AG04449 (cell line): ENCODE measurements at regions of chr4 and their contacts with region 1.

Region 1: GRCh38 chr4:88021824-88022223 is 14.4 kb downstream of the PKD2 start:
- DNase-seq: no peak
- H3K4me3 ChIP-seq: no peak overlapping the region
- CTCF ChIP-seq: no peak

Region 2: DNA sequence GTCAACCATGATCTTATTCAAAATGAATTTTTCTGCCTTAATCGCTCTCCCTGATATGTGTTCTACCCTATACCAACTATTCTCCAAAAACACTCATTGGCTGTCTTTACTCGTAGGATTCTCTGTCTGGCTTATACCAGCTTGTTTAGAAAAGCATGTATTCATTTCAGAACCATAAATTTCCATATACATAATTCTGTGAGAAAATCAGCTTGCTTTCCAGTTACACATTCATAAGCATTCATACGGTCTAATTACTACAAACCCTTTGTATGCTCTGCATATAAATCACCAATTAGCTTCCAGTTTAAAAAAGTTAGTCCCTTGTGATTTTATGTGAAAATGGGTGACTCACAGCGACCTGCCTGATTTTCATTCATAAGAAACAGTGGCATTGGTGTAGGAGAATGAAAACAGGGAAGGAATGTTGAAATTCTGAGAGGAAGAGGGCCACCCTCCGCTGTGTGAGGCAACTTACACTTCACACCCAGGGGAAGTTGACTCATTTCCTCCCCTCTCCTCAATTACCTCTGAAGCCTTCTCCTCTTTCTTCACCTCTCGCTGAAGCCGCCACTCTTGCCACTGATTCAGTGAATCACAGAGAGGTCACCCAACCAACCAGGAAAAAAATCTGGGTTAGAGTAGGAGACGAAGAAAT is 125.7 kb before region 1 on chr4:
- CTCF ChIA-PET with region 1: no interaction called
- POLR2A ChIA-PET with region 1: no interaction called
- DNase-seq: peak; percentile 19
- H3K4me3 ChIP-seq: no peak overlapping the region
- CTCF ChIP-seq: no peak

Region 3: GRCh38 chr4:88033309-88033708 is 11.5 kb after region 1 on chr4:
- CTCF ChIA-PET with region 1: interaction called, 39 read pairs
- POLR2A ChIA-PET with region 1: no interaction called
- DNase-seq: no peak
- H3K4me3 ChIP-seq: no peak overlapping the region
- CTCF ChIP-seq: peak; percentile 51

Region 4: GRCh38 chr4:88356771-88357170 is 334.9 kb after region 1 on chr4:
- CTCF ChIA-PET with region 1: no interaction called
- POLR2A ChIA-PET with region 1: no interaction called
- DNase-seq: no peak
- H3K4me3 ChIP-seq: no peak overlapping the region
- CTCF ChIP-seq: no peak